ENCODE measurements at regions of chr17 and their contacts with region 1.

Region 1: DNA sequence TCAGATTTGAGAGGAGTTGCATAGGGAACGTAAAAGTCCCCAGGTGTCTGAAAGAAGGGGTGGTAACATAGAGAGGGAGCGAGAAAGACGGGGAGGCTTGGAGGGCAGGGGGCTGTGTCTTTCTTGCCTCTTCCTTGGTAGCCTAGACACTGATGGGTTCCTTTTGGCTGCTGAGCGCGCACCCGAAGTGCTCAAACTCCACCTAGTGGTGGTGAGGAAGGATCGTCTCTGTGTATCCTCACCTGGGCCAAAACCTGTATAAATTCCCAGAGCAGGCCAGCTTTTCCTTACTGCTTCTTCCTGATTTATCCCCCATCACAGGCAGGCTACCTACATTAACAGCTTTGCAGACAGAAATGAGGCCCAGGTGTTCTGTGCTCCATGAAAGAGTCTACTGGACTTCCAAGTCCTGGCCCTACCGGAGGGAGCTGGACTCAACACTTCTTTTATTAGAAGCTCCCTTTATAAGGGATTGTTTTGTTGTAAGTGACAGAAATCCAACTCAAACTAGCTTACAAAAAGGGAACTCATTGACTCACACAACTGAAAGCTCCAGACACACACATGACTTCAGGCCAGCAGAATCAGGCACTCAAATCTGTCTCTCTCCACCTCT is 5.5 kb upstream of the SLC25A35 start:
- DNase-seq: peak; percentile 77
- H3K4me3 Mint-ChIP-seq: no peak overlapping the region
- H3K27ac Mint-ChIP-seq: no peak overlapping the region
- H3K4me1 Mint-ChIP-seq: peaks cover 13% of the 10 kb centered on the region
- H3K27me3 Mint-ChIP-seq: no peaks in the 10 kb centered on the region
- CTCF ChIP-seq: peak; percentile 72

Region 2: DNA sequence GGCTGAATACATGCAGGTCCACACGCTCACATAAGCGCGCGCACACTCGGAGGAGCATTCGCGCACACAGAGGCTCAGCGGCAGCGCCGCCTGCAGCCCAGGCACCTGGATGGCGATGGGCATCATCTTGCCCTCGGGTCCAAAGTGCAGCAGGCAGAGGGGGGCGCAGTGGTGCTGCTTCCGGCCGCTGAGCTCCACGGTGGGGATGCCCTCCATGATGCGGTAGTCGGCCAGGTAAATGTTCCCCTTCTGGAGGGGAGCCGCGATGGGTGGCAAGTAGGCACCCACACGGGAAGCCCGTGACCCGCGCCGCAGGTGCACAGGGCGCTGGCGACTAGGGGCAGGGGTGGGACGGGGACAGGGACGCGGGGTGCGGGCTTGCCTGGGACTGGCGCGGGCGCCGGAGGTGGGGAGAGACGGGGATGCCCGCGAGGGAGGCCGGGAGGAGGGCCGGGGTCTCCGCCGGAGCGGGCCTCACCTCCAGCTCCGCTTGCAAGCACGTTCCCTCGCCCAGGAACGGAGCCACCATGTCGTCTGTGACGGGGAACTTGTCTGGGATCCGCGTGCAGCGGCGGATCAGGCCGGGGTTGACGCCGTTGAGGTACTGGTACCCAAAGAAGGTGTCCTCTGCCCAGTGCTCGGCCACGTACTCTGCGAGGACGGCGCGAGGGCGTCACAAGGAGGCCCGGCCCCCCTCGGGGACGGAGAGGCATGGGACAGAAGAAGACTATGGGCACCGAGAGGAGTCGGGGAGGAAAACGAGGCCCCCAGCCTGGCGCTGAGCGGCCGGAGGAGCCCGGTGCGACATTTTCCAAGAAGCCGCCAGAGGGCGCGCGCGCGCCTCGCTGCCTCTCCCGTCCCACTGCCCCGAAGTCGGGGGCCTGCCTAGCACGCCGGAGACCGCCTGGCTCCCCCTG is 221.2 kb before region 1 on chr17:
- CTCF ChIA-PET with region 1: interaction called, 7 read pairs
- POLR2A ChIA-PET with region 1: no interaction called
- intact Hi-C with region 1: loop called (anchors 5 kb)
- DNase-seq: peak; percentile 60
- H3K4me3 Mint-ChIP-seq: peak overlapping the region; percentile 61
- H3K27ac Mint-ChIP-seq: no peak overlapping the region
- H3K4me1 Mint-ChIP-seq: peaks cover 6% of the 10 kb centered on the region
- H3K27me3 Mint-ChIP-seq: peaks cover 11% of the 10 kb centered on the region
- CTCF ChIP-seq: peak; percentile 87

Region 3: GRCh38 chr17:8430966-8431365 is 130.2 kb after region 1 on chr17:
- CTCF ChIA-PET with region 1: no interaction called
- POLR2A ChIA-PET with region 1: no interaction called
- intact Hi-C with region 1: no loop called
- DNase-seq: peak; percentile 84
- H3K4me3 Mint-ChIP-seq: no peak overlapping the region
- H3K27ac Mint-ChIP-seq: peak overlapping the region; percentile 46
- H3K4me1 Mint-ChIP-seq: peaks cover 12% of the 10 kb centered on the region
- H3K27me3 Mint-ChIP-seq: no peaks in the 10 kb centered on the region
- CTCF ChIP-seq: no peak

Region 4: GRCh38 chr17:8727065-8727511 is 426.4 kb after region 1 on chr17:
- CTCF ChIA-PET with region 1: no interaction called
- POLR2A ChIA-PET with region 1: no interaction called
- intact Hi-C with region 1: no loop called
- DNase-seq: peak; percentile 87
- H3K4me3 Mint-ChIP-seq: no peak overlapping the region
- H3K27ac Mint-ChIP-seq: peak overlapping the region; percentile 71
- H3K4me1 Mint-ChIP-seq: peaks cover 13% of the 10 kb centered on the region
- H3K27me3 Mint-ChIP-seq: no peaks in the 10 kb centered on the region
- CTCF ChIP-seq: no peak